ENCODE measurements at regions of chr17 and their contacts with region 1.

Region 1: DNA sequence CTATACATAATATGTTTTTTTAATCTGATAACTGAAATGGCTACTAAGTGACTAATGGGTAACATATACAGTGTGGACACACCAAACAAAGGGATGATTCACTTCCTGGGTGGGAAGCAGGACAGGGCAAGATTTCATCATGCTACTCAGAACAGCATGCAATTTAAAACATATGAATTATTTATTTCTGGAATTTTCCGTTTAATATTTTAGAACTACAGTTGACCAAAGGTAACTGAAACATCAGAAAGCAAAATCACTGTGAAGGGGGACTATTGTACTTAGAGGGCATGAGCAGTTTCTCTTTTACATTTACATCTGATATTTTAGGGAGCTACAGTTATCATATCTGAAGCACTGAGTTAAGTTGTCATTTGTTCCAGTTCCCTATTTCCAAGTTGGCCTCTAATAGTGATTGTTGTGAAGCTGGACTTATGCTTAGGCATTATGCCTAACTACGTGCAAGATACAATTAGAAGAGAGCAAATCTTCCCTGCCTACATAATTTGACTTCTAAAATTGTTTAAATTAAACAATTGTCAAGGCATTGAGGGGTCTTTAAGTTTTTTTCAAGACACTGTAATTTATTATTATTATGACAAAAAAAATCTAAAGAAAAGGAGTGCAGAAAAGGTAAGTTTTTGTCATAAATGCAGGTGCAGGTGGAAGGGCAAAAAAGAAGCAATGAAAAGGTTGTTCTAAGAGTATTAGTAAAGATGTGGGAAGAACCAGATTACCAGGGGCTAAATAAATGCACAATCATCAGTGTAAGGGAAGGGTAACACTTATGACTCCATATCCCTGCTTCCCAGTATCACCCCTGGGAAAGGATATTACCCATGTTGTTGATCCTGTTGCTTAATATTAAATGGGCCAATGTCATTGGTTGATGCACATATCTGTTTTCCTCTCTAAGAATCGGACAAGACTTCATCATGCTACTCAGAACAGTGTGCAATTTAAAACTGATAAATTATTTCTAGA is 34.4 kb upstream of the ABCA6 start:
- DNase-seq: peak; percentile 24
- H3K4me3 Mint-ChIP-seq: no peak overlapping the region
- H3K27ac Mint-ChIP-seq: peak overlapping the region; percentile 94
- H3K4me1 Mint-ChIP-seq: peaks cover 68% of the 10 kb centered on the region
- H3K27me3 Mint-ChIP-seq: no peaks in the 10 kb centered on the region
- CTCF ChIP-seq: no peak

Region 2: GRCh38 chr17:69047368-69048263 is 128.5 kb before region 1 on chr17:
- CTCF ChIA-PET with region 1: no interaction called
- intact Hi-C with region 1: loop called (anchors 5 kb)
- DNase-seq: peak; percentile 68
- H3K4me3 Mint-ChIP-seq: peak overlapping the region; percentile 24
- H3K27ac Mint-ChIP-seq: peak overlapping the region; percentile 77
- H3K4me1 Mint-ChIP-seq: peaks cover 12% of the 10 kb centered on the region
- H3K27me3 Mint-ChIP-seq: no peaks in the 10 kb centered on the region
- CTCF ChIP-seq: no peak

Region 3: DNA sequence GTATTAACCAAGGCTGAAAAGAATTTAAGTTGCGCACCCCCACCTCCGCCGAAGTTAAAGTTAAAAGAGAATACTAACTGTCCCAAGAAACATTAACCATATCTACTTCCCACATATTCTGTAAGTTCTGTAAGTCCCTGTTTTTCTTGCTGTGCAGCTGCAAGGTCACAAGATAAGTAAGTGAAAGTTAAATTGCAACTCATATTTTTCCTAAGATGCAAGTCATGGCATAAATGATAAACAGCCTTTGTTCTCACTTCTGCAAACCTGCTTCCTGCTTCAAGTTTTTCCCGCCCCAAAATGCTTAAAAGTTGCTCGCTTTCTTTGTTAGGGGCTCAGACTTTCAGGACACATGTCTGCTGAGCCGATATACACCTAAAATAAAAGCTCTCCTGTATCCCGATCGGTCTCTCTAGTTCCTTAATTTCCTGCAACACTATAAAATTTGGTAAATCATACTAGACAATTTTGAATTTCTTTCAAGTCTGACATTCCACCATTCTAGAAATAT is 82.8 kb before region 1 on chr17:
- CTCF ChIA-PET with region 1: no interaction called
- intact Hi-C with region 1: loop called (anchors 5 kb)
- DNase-seq: no peak
- H3K4me3 Mint-ChIP-seq: peak overlapping the region; percentile 44
- H3K27ac Mint-ChIP-seq: peak overlapping the region; percentile 87
- H3K4me1 Mint-ChIP-seq: peaks cover 18% of the 10 kb centered on the region
- H3K27me3 Mint-ChIP-seq: no peaks in the 10 kb centered on the region
- CTCF ChIP-seq: no peak